ENCODE measurements at regions of chr6 and their contacts with region 1.

Region 1: GRCh38 chr6:129936329-129937165 is 75.4 kb upstream of the TMEM244 start:
- DNase-seq: peak in 12 of 14 experiments; percentile 4 to 72 (median 25)
- ATAC-seq: no peak
- H3K4me3 ChIP-seq: no peak overlapping the region
- H3K4me3 Mint-ChIP-seq: no peak overlapping the region
- H3K27ac ChIP-seq: no peak overlapping the region
- H3K27ac Mint-ChIP-seq: no peak overlapping the region
- H3K4me1 ChIP-seq: no peaks in the 10 kb centered on the region
- H3K4me1 Mint-ChIP-seq: peaks cover 4% of the 10 kb centered on the region
- H3K27me3 ChIP-seq: peaks cover 0 to under 1% of the 10 kb centered on the region in 2 experiments
- H3K27me3 Mint-ChIP-seq: peaks cover 24% of the 10 kb centered on the region
- CTCF ChIP-seq: peak; percentile 88

Region 2: GRCh38 chr6:129153257-129153656 is 783.3 kb before region 1 on chr6:
- CTCF ChIA-PET with region 1: no interaction called
- POLR2A ChIA-PET with region 1: no interaction called
- intact Hi-C with region 1: no loop called
- DNase-seq: no peak
- ATAC-seq: no peak
- H3K4me3 ChIP-seq: no peak overlapping the region
- H3K4me3 Mint-ChIP-seq: no peak overlapping the region
- H3K27ac ChIP-seq: no peak overlapping the region
- H3K27ac Mint-ChIP-seq: no peak overlapping the region
- H3K4me1 ChIP-seq: no peaks in the 10 kb centered on the region
- H3K4me1 Mint-ChIP-seq: no peaks in the 10 kb centered on the region
- H3K27me3 ChIP-seq: no peaks in the 10 kb centered on the region
- H3K27me3 Mint-ChIP-seq: no peaks in the 10 kb centered on the region
- CTCF ChIP-seq: no peak

Region 3: DNA sequence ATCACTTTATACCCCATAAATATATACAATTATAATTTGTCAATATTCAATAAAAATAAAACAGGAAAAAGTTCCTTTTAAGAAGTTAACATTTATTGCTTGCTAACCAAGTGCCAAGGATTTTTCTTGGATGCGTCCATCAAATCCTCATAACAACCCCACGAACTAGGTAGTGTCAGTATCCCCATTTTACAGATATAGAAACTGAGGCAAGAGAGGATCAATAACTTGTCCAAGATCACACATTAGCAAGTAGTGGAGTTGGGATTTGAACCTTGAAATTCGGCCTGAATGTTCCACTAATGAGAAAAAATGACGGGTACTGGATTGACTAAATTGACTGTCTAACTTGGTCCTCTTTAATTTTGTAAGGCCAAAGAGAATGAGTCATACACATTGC is 76.2 kb after region 1 on chr6:
- CTCF ChIA-PET with region 1: no interaction called
- POLR2A ChIA-PET with region 1: no interaction called
- intact Hi-C with region 1: loop called in 1 of 2 experiments (anchors 2 kb)
- DNase-seq: no peak
- ATAC-seq: no peak
- H3K4me3 ChIP-seq: no peak overlapping the region
- H3K4me3 Mint-ChIP-seq: no peak overlapping the region
- H3K27ac ChIP-seq: no peak overlapping the region
- H3K27ac Mint-ChIP-seq: no peak overlapping the region
- H3K4me1 ChIP-seq: peaks cover 2% of the 10 kb centered on the region
- H3K4me1 Mint-ChIP-seq: no peaks in the 10 kb centered on the region
- H3K27me3 ChIP-seq: no peaks in the 10 kb centered on the region
- H3K27me3 Mint-ChIP-seq: no peaks in the 10 kb centered on the region
- CTCF ChIP-seq: no peak